HepG2 (cell line): ENCODE measurements at regions of chr6 and their contacts with region 1.

Region 1: DNA sequence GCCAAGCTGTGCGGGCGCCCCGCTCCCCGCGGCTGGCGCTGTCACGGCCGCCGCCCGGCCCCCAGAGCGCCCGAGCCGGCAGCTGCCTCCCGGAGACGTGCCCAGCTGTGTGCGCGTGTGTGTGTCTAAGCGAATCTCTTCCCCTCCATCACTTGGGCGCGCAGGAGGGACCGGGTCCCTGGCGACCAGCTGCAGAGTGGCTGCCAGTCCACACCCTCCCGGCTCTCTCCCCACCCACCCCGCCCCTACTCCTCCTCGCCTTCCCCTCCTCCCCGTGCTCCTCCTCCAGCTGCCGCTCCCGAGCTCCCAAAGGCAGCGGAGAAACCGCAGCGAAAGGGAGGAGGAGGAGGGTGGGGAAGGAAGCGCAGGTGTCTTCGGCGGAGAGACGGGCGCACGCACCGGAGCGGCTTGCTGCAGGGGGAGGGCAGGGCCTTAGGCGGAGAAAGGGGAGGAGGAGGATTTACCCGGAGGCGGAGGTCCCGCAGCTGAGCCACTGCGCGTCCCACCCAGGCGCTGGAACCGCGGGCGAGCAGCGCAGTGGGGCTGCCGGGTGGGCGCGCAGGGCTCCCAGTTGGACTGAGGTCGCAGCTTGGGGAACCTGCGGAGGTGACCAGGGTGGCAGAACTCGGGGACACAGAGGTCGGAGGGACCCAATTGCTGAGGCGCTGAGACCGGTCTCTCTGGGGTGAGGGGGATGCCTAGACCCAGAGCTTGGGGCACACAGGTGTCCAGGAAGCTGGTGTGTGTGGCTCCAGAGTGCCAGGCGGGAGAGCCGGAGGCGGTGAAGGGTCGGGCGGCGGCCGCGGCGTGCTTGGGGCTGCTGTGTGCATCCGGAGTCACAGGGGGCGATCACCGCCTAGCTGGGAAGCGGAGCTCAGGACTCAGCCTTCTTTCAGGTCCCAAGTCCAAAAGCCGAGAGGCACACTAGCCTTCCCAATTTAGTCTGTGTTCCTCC is at the start of gene HS3ST5:
- DNase-seq: peak; percentile 57
- ATAC-seq: peak; percentile 94
- H3K4me3 ChIP-seq: peak within 1 kb of the TSS; percentile 61 to 90 (median 90)
- H3K27ac ChIP-seq: peak within 1 kb of the TSS; percentile 52
- H3K4me1 ChIP-seq: peaks cover 33% of the 10 kb centered on the region
- H3K27me3 ChIP-seq: no peaks in the 10 kb centered on the region; a peak in 2 of 5 replicates
- CTCF ChIP-seq: peak; percentile 89
- EP300 ChIP-seq: no peak
- POLR2A ChIP-seq: peak in 1 of 2 experiments; percentile 47; a peak in 2 of 4 replicates
- RAD21 ChIP-seq: peak; percentile 69
- total RNA-seq, gene HS3ST5: 1.0 and 1.1 TPM in 2 replicates

Region 2: DNA sequence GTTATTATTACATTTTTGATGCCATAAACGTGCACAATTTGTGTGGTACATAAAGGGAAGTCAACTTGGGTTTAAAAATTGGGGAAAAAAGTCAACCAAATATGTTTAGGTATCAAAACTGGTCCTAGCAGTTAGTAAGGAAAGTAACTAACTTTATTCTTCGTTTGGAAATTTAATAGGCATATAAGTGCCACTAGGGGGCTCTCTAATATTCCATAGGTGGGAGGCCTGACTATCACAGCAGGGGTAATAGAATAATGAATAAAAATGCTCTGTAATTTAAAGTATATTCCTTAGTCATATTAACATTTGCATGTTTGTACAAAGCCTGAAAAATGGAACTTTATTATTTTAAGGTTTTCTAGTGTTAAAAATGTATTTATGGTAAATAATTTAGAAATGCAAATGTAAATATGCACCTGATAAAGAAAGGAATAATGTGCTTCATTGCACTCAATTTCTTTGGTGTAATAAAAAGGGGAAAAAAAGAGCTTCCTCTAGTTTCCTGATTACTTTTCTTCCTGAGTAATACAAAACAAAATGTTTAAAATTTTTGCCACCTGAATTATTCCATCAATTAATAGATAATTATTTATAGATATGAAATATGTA is 246.4 kb before region 1 on chr6:
- CTCF ChIA-PET with region 1: no interaction called
- POLR2A ChIA-PET with region 1: no interaction called
- in situ Hi-C with region 1: no loop called
- intact Hi-C with region 1: loop called (anchors 2 kb)
- DNase-seq: peak; percentile 46
- ATAC-seq: no peak
- H3K4me3 ChIP-seq: no peak overlapping the region
- H3K27ac ChIP-seq: no peak overlapping the region
- H3K4me1 ChIP-seq: peaks cover 12% of the 10 kb centered on the region
- H3K27me3 ChIP-seq: no peaks in the 10 kb centered on the region
- CTCF ChIP-seq: peak; percentile 63
- EP300 ChIP-seq: no peak
- POLR2A ChIP-seq: no peak
- RAD21 ChIP-seq: peak; percentile 62; the same call in 1 of the 2 replicates

Region 3: DNA sequence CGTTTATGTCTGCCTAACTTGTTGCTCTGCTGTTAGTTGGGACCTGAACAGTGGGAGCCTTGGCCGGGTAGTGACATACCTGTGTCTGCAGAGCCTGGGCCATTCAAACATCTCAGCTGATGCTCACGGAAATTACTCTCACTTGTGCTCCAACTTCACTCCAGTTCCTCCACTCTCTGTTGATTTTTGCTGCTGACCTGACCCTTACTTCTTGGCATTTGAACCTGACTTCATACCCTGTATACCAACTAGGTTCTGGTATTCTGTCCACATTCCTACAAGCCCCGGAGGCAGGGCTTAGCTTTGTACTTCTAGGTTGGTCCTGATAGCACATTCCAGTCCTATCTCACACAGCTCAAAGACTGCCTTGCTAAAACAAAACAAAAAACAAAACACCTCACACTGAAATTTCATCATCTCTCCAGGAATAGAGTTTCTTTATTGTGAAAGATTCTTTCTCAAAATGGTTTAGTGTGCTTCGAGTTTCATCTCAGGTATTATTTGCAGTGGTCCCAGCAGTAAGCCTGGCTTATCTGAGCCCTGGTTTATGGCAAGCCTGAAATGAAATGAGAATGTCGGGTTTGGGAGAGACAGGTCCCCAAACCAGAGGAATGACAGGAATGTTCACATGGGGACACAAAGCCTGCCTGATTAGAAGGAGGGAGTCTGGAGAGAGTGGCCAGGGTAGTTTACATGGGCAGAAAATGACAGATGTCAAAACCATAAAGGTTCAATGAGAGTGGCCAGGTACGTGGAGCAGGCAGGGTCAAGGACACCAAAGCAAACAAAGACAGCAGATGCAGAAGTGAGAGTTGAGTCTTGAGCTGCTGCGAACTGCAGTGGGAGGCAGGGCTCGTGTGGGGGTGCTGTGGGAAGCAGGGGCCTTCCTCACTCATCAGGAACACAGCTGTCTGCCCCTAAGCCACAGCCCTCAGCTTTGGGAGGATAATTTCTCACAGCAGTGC is 197.9 kb before region 1 on chr6:
- CTCF ChIA-PET with region 1: no interaction called
- POLR2A ChIA-PET with region 1: no interaction called
- in situ Hi-C with region 1: no loop called
- intact Hi-C with region 1: loop called (anchors 1 kb)
- DNase-seq: peak; percentile 98
- ATAC-seq: peak; percentile 99
- H3K4me3 ChIP-seq: peak overlapping the region; percentile 30 to 53 (median 44); a peak in 5 of 6 replicates
- H3K27ac ChIP-seq: peak overlapping the region; percentile 82
- H3K4me1 ChIP-seq: peaks cover 54% of the 10 kb centered on the region
- H3K27me3 ChIP-seq: no peaks in the 10 kb centered on the region
- CTCF ChIP-seq: peak; percentile 48
- EP300 ChIP-seq: peak; percentile 38 to 88; a peak in 3 of 4 replicates
- POLR2A ChIP-seq: no peak; a peak in 1 of 4 replicates
- RAD21 ChIP-seq: no peak

Region 4: GRCh38 chr6:114304304-114304887 is 38.7 kb before region 1 on chr6:
- CTCF ChIA-PET with region 1: no interaction called
- POLR2A ChIA-PET with region 1: interaction called, 3 read pairs
- in situ Hi-C with region 1: no loop called
- intact Hi-C with region 1: loop called (anchors 2 kb)
- DNase-seq: peak; percentile 19
- ATAC-seq: no peak
- H3K4me3 ChIP-seq: no peak overlapping the region
- H3K27ac ChIP-seq: no peak overlapping the region
- H3K4me1 ChIP-seq: peaks cover 36% of the 10 kb centered on the region
- H3K27me3 ChIP-seq: no peaks in the 10 kb centered on the region
- CTCF ChIP-seq: peak; percentile 34; the same call in 1 of the 2 replicates
- EP300 ChIP-seq: no peak
- POLR2A ChIP-seq: no peak
- RAD21 ChIP-seq: no peak

Region 5: DNA sequence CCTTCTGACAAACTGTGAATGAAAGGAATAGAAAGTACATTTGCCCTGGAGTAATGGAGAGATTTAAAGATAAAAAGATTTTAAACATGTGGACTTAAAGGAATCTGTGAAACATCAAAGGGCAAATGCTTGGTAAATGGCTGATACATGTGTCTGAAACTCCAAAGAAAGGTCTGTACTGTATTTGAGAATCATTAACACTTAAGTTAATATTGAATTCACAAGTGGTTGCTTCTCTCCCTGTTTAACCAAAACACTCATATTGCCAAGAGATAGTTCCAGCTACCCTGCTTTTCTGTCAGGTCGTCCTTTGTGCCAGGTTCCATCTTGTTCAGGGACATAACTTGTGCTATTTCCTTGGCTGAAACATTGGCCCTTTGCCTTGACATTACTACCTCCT is 171.1 kb after region 1 on chr6:
- CTCF ChIA-PET with region 1: no interaction called
- POLR2A ChIA-PET with region 1: no interaction called
- in situ Hi-C with region 1: no loop called
- intact Hi-C with region 1: loop called (anchors 10 kb)
- DNase-seq: peak; percentile 15
- ATAC-seq: peak; percentile 60; the same call in 2 of the 3 replicates
- H3K4me3 ChIP-seq: no peak overlapping the region
- H3K27ac ChIP-seq: no peak overlapping the region
- H3K4me1 ChIP-seq: peaks cover 13% of the 10 kb centered on the region
- H3K27me3 ChIP-seq: no peaks in the 10 kb centered on the region
- CTCF ChIP-seq: no peak
- EP300 ChIP-seq: peak in 1 of 2 experiments; percentile 8; a peak in 1 of 4 replicates
- POLR2A ChIP-seq: no peak
- RAD21 ChIP-seq: no peak